Right ventricle myocardium superior (tissue), 1 donor: ENCODE measurements at regions of chr19 and their contacts with region 1.

Region 1: DNA sequence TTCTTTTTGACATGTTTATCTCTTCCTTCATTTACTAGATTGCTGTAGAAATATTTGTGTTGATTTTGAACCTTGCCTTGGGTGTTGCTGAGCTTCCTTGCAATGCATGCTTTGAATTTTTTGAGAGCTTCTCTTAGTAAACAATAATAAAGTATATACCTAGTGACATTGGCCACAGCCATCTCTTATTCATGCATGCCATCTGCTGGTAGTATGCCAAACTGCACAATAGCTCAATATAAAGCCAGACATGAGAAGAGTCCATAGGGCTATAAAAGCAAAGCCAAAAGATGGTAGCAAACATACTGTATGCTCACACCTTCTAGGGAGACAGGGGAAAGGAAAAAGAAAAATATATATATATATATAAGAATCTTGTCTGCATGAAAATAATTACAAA is 18.9 kb upstream of the ZSCAN5A start:
- DNase-seq: no peak
- ATAC-seq: peak; percentile 67

Region 2: GRCh38 chr19:56066152-56067023 is 267.1 kb before region 1 on chr19:
- intact Hi-C with region 1: loop called (anchors 5 kb)
- DNase-seq: peak; percentile 77
- ATAC-seq: peak; percentile 81

Region 3: GRCh38 chr19:56441206-56441792 is 107.8 kb after region 1 on chr19:
- intact Hi-C with region 1: no loop called
- DNase-seq: no peak
- ATAC-seq: no peak